SK-N-SH (cell line): ENCODE measurements at regions of chr11 and their contacts with region 1.

Region 1: DNA sequence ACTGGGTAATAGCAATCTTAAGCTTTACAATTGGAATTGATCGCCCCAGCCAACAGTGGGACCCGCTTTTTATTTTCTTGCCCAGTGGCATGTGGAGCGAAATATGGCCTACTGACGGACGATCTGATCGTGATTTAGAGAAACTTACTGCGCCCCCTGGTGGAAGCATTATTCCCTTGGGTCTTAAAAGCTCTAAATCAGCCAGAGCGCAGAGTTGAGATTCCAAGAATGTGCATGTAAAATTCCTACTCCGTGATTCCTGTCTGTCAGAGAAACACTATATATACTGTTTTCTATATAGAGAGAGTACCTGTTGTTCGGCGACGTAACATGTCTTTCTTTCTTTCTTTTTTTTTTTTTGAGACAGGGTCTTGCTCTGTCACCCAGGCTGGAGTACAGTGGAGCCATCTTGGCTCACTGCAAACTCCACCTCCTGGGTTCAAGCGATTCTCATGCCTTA is 3.7 kb upstream of the DPF2 start:
- DNase-seq: peak; percentile 70
- H3K4me3 ChIP-seq: peak overlapping the region in 1 of 2 experiments; percentile 36; a peak in 1 of 4 replicates
- H3K27ac ChIP-seq: peak overlapping the region in 1 of 2 experiments; percentile 13; a peak in 2 of 4 replicates
- H3K4me1 ChIP-seq: peaks cover 3 to 4% of the 10 kb centered on the region in 2 experiments; a peak in 3 of 4 replicates
- H3K27me3 ChIP-seq: no peaks in the 10 kb centered on the region
- CTCF ChIP-seq: peak; percentile 85
- EP300 ChIP-seq: no peak
- RAD21 ChIP-seq: peak; percentile 72

Region 2: DNA sequence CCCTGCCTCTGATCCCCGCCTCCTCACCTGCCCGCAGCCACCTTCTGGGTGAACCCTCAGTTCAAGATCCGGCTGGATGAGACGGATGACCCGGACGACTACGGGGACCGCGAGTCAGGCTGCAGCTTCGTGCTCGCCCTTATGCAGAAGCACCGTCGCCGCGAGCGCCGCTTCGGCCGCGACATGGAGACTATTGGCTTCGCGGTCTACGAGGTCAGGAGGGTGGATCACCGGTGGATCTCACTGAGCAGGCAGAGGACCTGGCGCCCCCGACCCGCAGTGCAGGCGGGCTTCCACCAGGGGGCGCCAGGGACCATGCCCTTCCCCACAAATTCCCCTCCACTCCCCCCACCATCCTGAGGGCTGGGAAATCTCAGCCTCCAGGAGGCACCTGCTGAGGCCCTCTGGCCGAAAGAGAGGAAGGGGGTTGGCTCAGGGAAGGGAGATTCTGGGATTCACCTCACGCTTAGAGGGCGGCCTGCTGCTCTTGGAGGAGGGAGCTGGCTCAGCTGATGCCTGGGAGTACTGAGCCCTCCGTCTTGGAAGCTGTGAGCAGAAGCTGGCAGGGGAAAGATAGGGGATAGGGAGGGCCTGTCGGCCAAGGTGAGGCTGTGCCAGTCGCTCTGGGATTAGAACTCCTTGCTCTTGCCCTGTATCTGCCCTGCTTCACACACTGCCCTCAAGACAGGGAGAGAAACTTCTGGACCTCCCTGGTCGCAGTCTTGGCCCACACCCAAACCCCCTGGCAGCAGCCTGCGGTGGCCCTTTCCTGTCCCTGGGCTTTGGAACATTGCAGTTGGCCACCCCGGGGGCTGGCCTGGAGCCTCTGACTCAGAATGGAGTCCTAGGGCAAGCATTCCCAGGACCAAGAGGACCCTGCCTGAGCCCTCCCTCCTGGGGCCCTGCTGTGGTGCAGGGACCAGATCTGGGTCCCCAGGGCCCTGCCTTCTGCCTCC is 125.0 kb before region 1 on chr11:
- CTCF ChIA-PET with region 1: interaction called, 21 read pairs
- POLR2A ChIA-PET with region 1: no interaction called
- DNase-seq: peak; percentile 92
- H3K4me3 ChIP-seq: no peak overlapping the region
- H3K27ac ChIP-seq: no peak overlapping the region
- H3K4me1 ChIP-seq: no peaks in the 10 kb centered on the region
- H3K27me3 ChIP-seq: no peaks in the 10 kb centered on the region
- CTCF ChIP-seq: peak; percentile 85
- EP300 ChIP-seq: no peak
- RAD21 ChIP-seq: peak; percentile 70

Region 3: GRCh38 chr11:65225279-65226102 is 104.5 kb before region 1 on chr11:
- CTCF ChIA-PET with region 1: interaction called, 56 read pairs
- POLR2A ChIA-PET with region 1: no interaction called
- DNase-seq: peak; percentile 87
- H3K4me3 ChIP-seq: peak overlapping the region; percentile 29 to 40; a peak in 3 of 4 replicates
- H3K27ac ChIP-seq: no peak overlapping the region
- H3K4me1 ChIP-seq: peaks cover 2 to 9% of the 10 kb centered on the region in 2 experiments; a peak in 2 of 4 replicates
- H3K27me3 ChIP-seq: no peaks in the 10 kb centered on the region
- CTCF ChIP-seq: peak; percentile 66
- EP300 ChIP-seq: no peak
- RAD21 ChIP-seq: peak; percentile 62

Region 4: GRCh38 chr11:65274735-65275682 is 55.0 kb before region 1 on chr11:
- CTCF ChIA-PET with region 1: interaction called, 1,118 read pairs
- POLR2A ChIA-PET with region 1: interaction called, 10 read pairs
- DNase-seq: peak; percentile 76
- H3K4me3 ChIP-seq: no peak overlapping the region
- H3K27ac ChIP-seq: peak overlapping the region; percentile 36 to 59; a peak in 3 of 4 replicates
- H3K4me1 ChIP-seq: peaks cover 0 to 34% of the 10 kb centered on the region in 2 experiments; a peak in 3 of 4 replicates
- H3K27me3 ChIP-seq: no peaks in the 10 kb centered on the region
- CTCF ChIP-seq: peak; percentile 87
- EP300 ChIP-seq: peak in 1 of 2 experiments; percentile 53; a peak in 1 of 4 replicates
- RAD21 ChIP-seq: peak; percentile 99

Region 5: DNA sequence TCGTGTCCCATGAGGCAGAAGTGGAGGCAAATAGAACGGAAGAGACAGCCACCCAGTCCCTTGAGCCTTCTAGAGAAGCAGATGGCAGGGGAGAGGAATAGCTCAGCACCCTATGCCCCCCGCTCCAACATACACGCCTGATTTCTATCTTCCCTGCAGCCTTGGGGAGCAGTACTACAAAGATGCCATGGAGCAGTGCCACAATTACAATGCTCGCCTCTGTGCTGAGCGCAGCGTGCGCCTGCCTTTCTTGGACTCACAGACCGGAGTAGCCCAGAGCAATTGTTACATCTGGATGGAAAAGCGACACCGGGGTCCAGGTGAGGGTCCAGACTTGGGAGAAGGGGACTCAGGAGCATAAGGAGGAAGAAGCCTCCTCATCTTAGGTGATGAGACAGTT is 10.3 kb after region 1 on chr11:
- CTCF ChIA-PET with region 1: interaction called, 15 read pairs
- POLR2A ChIA-PET with region 1: no interaction called
- DNase-seq: no peak
- H3K4me3 ChIP-seq: no peak overlapping the region
- H3K27ac ChIP-seq: no peak overlapping the region
- H3K4me1 ChIP-seq: peaks cover 0 to 6% of the 10 kb centered on the region in 2 experiments; a peak in 1 of 4 replicates
- H3K27me3 ChIP-seq: no peaks in the 10 kb centered on the region
- CTCF ChIP-seq: no peak
- EP300 ChIP-seq: no peak
- RAD21 ChIP-seq: no peak